Naive thymus-derived CD4-positive, alpha-beta T cell (primary cell): ENCODE measurements at regions of chr4 and their contacts with region 1.

Region 1: DNA sequence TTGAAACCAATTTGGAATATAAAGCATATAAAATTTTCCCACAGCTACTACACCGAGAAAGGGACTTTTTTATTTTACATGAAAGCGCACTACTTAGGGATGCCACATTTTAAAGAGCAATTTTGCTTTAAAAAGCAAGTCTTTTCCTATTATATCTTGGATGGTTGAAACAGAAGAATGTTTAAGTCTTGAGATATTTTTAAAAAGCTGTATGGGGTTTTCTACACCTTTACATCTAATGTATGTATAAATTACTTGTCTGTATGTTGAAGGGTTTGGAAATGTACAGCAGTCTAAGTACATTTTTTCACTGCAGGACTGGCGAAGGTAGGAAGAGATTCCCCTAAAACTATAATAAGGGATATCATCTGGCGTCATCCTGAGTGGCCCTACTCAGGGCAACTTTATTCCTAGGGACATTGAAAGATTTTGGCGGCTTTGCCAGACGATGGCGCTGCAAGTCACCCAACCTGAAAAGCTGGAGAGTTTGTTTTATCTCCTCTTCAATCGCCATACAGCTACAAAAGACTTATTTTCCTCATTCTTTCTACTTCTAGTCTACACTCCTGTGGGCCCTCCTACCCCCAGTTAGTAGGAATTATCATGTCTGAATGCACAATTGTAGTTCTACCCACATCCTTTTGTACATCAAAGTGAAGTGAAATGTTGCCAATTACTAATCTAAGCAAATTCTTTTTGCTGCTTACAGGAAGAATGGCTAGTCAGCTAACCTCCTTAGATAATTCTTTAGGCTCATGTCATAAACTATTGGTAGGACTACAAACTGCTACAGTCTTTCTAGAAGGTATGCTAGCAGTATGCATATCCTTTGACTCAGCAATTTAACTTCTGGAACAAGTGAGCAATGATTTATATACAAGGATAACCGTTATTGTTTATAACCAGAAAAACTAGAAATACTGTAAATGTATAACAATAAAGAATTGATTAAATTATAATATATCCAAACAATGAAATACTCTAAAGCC is 782 bp upstream of the NEK1 start:
- DNase-seq: peak; percentile 37 to 78 (median 73)
- ATAC-seq: peak; percentile 62
- H3K4me3 ChIP-seq: peak overlapping the region; percentile 98
- H3K4me3 Mint-ChIP-seq: peak overlapping the region; percentile 90 to 99 (median 98)
- H3K27ac ChIP-seq: peak overlapping the region; percentile 99
- H3K27ac Mint-ChIP-seq: peak overlapping the region; percentile 97 to 100 (median 100)
- H3K4me1 ChIP-seq: peaks cover 8 to 25% of the 10 kb centered on the region in 2 donors
- H3K4me1 Mint-ChIP-seq: peaks cover 12 to 73% (median 50%) of the 10 kb centered on the region in 7 donors
- H3K27me3 ChIP-seq: no peaks in the 10 kb centered on the region
- H3K27me3 Mint-ChIP-seq: no peaks in the 10 kb centered on the region

Region 2: GRCh38 chr4:168480931-168481611 is 1132.1 kb before region 1 on chr4:
- CTCF ChIA-PET with region 1: no interaction called
- POLR2A ChIA-PET with region 1: no interaction called
- intact Hi-C with region 1: loop called (anchors 1 to 2 kb)
- DNase-seq: peak in 8 of 9 donors; percentile 22 to 85 (median 78)
- ATAC-seq: peak; percentile 75
- H3K4me3 ChIP-seq: peak overlapping the region; percentile 72
- H3K4me3 Mint-ChIP-seq: peak overlapping the region; percentile 88 to 100 (median 98)
- H3K27ac ChIP-seq: peak overlapping the region; percentile 95
- H3K27ac Mint-ChIP-seq: peak overlapping the region; percentile 98 to 100 (median 99)
- H3K4me1 ChIP-seq: peaks cover 20 to 33% of the 10 kb centered on the region in 2 donors
- H3K4me1 Mint-ChIP-seq: peaks cover 46 to 82% (median 74%) of the 10 kb centered on the region in 7 donors
- H3K27me3 ChIP-seq: no peaks in the 10 kb centered on the region
- H3K27me3 Mint-ChIP-seq: no peaks in the 10 kb centered on the region

Region 3: DNA sequence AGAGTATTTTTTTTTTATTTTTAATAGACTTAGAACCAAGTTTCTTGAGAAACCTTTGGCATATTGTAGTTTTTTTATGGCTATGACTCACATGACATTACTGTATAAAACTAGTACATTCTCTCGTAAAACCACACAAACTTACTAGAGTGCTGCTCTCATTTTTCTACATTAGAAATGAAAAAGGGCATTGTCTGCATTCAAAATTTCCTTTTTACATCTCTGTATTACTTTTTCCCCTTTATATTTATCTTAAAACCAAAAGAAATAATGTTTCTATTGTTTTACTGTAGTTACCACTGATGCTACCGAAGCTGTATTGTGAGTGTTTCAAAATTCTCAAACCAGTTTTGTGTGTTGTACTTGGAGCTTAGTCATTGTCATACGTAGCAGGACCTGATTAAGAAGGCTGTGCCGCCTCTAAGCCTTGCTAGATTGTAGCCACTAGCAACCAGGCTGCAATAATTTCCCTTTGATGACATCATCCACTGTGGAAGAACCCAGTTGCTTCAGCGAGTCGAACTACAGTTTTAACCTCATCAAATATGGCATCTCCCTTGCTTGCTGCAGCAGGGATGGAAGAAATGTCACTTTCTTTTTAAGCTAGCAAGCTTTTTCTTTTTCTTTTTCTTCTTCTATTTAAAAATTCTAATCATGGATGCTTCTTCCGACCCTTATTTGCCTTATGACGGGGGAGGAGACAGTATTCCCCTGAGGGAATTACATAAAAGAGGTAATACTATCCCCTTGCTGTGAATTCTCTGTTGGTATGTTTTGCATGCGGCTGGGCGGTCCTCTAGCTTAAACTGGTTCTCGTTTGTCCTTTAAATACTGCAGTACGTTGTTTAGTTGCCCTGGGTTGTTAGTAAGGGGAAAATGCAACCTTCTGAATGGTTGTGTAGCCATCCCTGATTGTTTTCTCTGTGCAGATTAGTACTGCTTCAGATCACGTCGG is 46.8 kb after region 1 on chr4:
- CTCF ChIA-PET with region 1: no interaction called
- POLR2A ChIA-PET with region 1: interaction called, 3 read pairs
- intact Hi-C with region 1: loop called (anchors 1 kb)
- DNase-seq: peak in 8 of 9 donors; percentile 52 to 92 (median 74)
- ATAC-seq: peak; percentile 98
- H3K4me3 ChIP-seq: peak overlapping the region; percentile 15
- H3K4me3 Mint-ChIP-seq: peak overlapping the region; percentile 46 to 88 (median 79)
- H3K27ac ChIP-seq: peak overlapping the region; percentile 63
- H3K27ac Mint-ChIP-seq: peak overlapping the region; percentile 79 to 95 (median 89)
- H3K4me1 ChIP-seq: peaks cover 0 to 9% of the 10 kb centered on the region in 2 donors
- H3K4me1 Mint-ChIP-seq: peaks cover 17 to 63% (median 43%) of the 10 kb centered on the region in 7 donors
- H3K27me3 ChIP-seq: no peaks in the 10 kb centered on the region
- H3K27me3 Mint-ChIP-seq: no peaks in the 10 kb centered on the region

Region 4: GRCh38 chr4:169723207-169723965 is 110.2 kb after region 1 on chr4:
- CTCF ChIA-PET with region 1: interaction called, 4 read pairs
- POLR2A ChIA-PET with region 1: no interaction called
- intact Hi-C with region 1: loop called in 1 of 2 experiments (anchors 1 kb)
- DNase-seq: peak in 3 of 9 donors; percentile 3 to 11 (median 8)
- ATAC-seq: no peak
- H3K4me3 ChIP-seq: no peak overlapping the region
- H3K4me3 Mint-ChIP-seq: no peak overlapping the region
- H3K27ac ChIP-seq: no peak overlapping the region
- H3K27ac Mint-ChIP-seq: no peak overlapping the region
- H3K4me1 ChIP-seq: no peaks in the 10 kb centered on the region
- H3K4me1 Mint-ChIP-seq: peaks cover 1 to 22% (median 16%) of the 10 kb centered on the region in 7 donors
- H3K27me3 ChIP-seq: no peaks in the 10 kb centered on the region
- H3K27me3 Mint-ChIP-seq: no peaks in the 10 kb centered on the region

Region 5: GRCh38 chr4:169774466-169775445 is 161.6 kb after region 1 on chr4:
- CTCF ChIA-PET with region 1: interaction called, 7 read pairs
- POLR2A ChIA-PET with region 1: interaction called, 3 read pairs
- intact Hi-C with region 1: loop called in 1 of 2 experiments (anchors 1 kb)
- DNase-seq: peak in 7 of 9 donors; percentile 14 to 27 (median 22)
- ATAC-seq: peak; percentile 59
- H3K4me3 ChIP-seq: no peak overlapping the region
- H3K4me3 Mint-ChIP-seq: peak overlapping the region; percentile 34 to 72 (median 50)
- H3K27ac ChIP-seq: no peak overlapping the region
- H3K27ac Mint-ChIP-seq: peak overlapping the region in 1 of 9 donors; percentile 31
- H3K4me1 ChIP-seq: peaks cover 0 to 5% of the 10 kb centered on the region in 2 donors
- H3K4me1 Mint-ChIP-seq: peaks cover 4 to 13% (median 7%) of the 10 kb centered on the region in 7 donors
- H3K27me3 ChIP-seq: no peaks in the 10 kb centered on the region
- H3K27me3 Mint-ChIP-seq: peaks cover 21 to 37% (median 26%) of the 10 kb centered on the region in 5 donors

Region 6: DNA sequence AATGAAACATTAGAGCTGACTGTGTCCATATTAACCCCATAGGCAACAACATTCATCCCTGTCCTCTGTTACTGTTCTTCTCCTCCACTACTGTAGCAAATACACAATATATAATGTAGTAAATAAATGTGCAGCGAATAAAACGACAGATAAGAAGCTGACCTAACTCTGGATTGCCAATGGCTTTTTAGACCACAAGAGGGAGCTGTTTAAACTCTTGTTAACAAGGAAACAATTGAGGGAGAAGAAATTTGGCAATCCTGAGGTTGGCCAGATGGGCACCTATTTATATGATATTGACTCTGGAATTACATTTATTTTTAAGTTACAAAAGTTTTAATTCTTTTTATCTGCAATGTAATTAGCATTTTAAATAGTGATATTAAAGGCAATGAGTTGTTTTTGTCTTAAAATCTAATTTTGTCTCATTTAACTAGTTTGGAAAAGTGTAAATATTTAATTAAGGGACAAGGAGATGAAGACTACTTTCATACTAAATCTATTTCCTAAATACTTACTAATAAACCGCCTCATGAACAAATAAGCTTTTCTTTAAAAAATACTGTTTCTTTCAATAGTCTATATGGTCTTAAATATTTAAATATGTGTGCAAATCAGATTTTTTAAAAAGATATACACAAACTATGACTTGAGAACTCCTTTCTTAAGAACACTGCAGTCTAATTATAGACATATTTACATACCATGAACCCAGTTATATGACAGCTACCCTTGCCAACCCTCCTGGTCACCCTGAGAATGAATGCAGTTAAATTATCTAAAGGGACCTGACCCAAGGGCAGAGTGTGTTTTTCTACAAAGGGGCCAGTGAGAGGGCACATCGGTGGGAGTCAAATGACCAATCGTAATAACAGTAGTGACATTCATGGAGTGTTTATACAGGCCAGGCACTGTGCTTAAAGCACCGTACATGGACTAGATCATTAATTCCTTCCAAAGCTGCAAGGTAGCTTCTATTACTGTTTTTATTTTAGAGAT is 197.5 kb after region 1 on chr4:
- CTCF ChIA-PET with region 1: interaction called, 10 read pairs
- POLR2A ChIA-PET with region 1: no interaction called
- intact Hi-C with region 1: loop called (anchors 1 to 2 kb)
- DNase-seq: peak in 7 of 9 donors; percentile 25 to 63 (median 47)
- ATAC-seq: no peak
- H3K4me3 ChIP-seq: no peak overlapping the region
- H3K4me3 Mint-ChIP-seq: no peak overlapping the region
- H3K27ac ChIP-seq: no peak overlapping the region
- H3K27ac Mint-ChIP-seq: no peak overlapping the region
- H3K4me1 ChIP-seq: no peaks in the 10 kb centered on the region
- H3K4me1 Mint-ChIP-seq: peaks cover 0 to 3% (median 0%) of the 10 kb centered on the region in 7 donors
- H3K27me3 ChIP-seq: no peaks in the 10 kb centered on the region
- H3K27me3 Mint-ChIP-seq: peaks cover 0 to 17% (median 5%) of the 10 kb centered on the region in 5 donors

Region 7: DNA sequence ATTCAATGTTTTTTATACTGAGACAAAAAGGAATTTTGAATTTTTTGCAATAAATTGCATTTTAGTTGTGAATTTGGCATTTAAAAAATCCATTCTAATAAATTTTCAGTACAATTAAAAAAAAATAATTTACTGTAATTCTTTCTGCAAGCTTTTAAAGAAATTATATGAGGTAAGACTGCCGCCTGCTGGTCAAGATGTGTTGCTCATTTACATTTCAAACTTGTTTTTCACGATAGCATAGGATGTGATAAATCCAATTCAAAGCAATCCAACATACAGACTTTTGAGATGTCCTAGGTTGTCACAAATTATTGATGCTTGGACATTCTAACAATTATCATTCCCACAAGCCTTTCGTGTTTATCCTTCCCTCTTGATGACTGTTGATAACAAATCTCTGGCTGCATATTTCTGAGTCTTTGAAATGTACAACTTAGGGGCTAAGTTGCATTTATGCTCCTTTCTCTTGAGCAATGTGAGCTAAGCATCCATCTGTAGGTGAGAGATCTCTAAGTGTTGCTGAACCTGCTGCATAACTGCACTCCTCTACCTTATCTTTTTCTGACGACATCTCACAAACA is 434.7 kb after region 1 on chr4:
- CTCF ChIA-PET with region 1: interaction called, 7 read pairs
- POLR2A ChIA-PET with region 1: no interaction called
- intact Hi-C with region 1: loop called (anchors 1 kb)
- DNase-seq: peak; percentile 10 to 68 (median 51)
- ATAC-seq: peak; percentile 48
- H3K4me3 ChIP-seq: no peak overlapping the region
- H3K4me3 Mint-ChIP-seq: no peak overlapping the region
- H3K27ac ChIP-seq: no peak overlapping the region
- H3K27ac Mint-ChIP-seq: peak overlapping the region in 1 of 9 donors; percentile 77
- H3K4me1 ChIP-seq: no peaks in the 10 kb centered on the region
- H3K4me1 Mint-ChIP-seq: no peaks in the 10 kb centered on the region
- H3K27me3 ChIP-seq: no peaks in the 10 kb centered on the region
- H3K27me3 Mint-ChIP-seq: peaks cover 0 to 3% (median 0%) of the 10 kb centered on the region in 5 donors